PC-3 (cell line): ENCODE measurements at regions of chr3 and their contacts with region 1.

Region 1: GRCh38 chr3:43997-44676 is 152.4 kb upstream of the CHL1 start:
- DNase-seq: no peak
- ATAC-seq: no peak
- H3K4me3 ChIP-seq: no peak overlapping the region
- H3K27ac ChIP-seq: no peak overlapping the region
- H3K4me1 ChIP-seq: no peaks in the 10 kb centered on the region
- H3K27me3 ChIP-seq: no peaks in the 10 kb centered on the region
- CTCF ChIP-seq: no peak

Region 2: GRCh38 chr3:124557-125179 is 80.5 kb after region 1 on chr3:
- CTCF ChIA-PET with region 1: no interaction called
- POLR2A ChIA-PET with region 1: no interaction called
- intact Hi-C with region 1: no loop called
- DNase-seq: no peak
- ATAC-seq: no peak
- H3K4me3 ChIP-seq: no peak overlapping the region
- H3K27ac ChIP-seq: no peak overlapping the region
- H3K4me1 ChIP-seq: no peaks in the 10 kb centered on the region
- H3K27me3 ChIP-seq: no peaks in the 10 kb centered on the region
- CTCF ChIP-seq: no peak

Region 3: DNA sequence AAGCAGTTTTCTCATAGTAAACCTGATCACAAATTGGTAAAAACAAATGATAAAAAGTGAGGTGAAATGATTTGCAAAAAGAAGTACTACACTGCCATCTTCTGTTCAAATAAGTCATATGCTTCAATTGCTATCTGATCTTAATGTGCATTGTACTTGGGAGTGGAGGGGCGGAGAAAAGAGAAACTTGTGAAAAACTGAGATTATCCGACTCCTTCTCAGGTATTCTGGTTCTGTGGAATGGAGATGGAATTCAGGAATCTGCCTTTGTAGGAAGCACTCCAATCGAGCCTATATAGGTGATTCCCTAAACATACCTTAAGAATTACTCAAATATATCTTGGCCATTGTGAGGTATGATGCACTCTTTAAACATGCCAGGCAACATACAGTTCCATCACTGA is 333.0 kb after region 1 on chr3:
- CTCF ChIA-PET with region 1: no interaction called
- POLR2A ChIA-PET with region 1: no interaction called
- intact Hi-C with region 1: loop called (anchors 1 kb)
- DNase-seq: peak; percentile 84
- ATAC-seq: peak; percentile 83
- H3K4me3 ChIP-seq: no peak overlapping the region
- H3K27ac ChIP-seq: 0 out of 2 replicates have a peak overlapping the region, but pooled peaks have one; percentile 16
- H3K4me1 ChIP-seq: peaks cover 40% of the 10 kb centered on the region
- H3K27me3 ChIP-seq: no peaks in the 10 kb centered on the region
- CTCF ChIP-seq: peak; percentile 83